ENCODE measurements at regions of chr4 and their contacts with region 1.

Region 1: DNA sequence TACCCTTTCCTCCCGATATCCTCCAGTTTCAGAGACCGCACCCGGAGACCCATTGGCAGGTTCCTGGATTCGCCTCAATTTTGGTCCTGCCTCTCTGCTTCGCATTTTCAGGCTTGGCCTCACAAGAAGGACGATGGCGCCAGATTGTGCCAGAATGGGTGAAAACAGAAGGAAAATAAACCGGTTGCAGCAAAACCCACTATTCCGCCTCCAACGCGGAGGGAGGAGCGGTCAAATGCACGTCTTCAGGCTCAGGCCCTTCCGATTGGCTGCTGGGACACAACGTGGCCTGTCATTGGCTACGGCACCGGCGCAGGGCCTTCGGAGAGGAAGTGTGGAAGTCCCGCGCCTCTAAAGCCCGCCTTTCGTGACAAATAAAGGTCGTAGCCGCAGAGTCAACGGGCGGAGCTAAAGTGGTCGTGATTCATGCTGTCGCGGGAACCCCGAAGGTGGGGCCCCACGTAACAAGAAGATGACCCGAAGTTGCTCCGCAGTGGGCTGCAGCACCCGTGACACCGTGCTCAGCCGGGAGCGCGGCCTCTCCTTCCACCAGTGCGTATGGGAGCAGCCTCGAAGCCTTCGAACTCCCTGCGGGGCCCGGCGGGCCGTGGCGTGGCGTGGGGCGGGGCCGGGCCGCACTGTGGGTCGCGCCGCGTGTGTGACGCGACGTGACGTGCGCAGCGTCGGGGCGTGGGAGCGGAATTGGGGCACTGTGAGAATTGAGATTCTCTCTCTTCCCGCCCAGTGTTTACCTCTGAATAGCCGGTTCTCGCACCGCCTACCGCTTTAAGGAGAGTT is at the start of gene THAP9:
- DNase-seq: peak; percentile 95 to 99
- ATAC-seq: peak; percentile 82 to 96 (median 86)
- H3K4me3 ChIP-seq: peak within 1 kb of the TSS; percentile 91
- H3K4me3 Mint-ChIP-seq: no peak within 1 kb of the TSS
- H3K27ac ChIP-seq: peak within 1 kb of the TSS; percentile 100
- H3K27ac Mint-ChIP-seq: no peak within 1 kb of the TSS
- H3K4me1 ChIP-seq: peaks cover 5% of the 10 kb centered on the region
- H3K4me1 Mint-ChIP-seq: peaks cover 10 to 11% of the 10 kb centered on the region in 2 donors
- H3K27me3 ChIP-seq: no peaks in the 10 kb centered on the region
- H3K27me3 Mint-ChIP-seq: no peaks in the 10 kb centered on the region
- CTCF ChIP-seq: no peak
- total RNA-seq, gene THAP9: 1.6 to 2.6 (median 2.1) TPM

Region 2: DNA sequence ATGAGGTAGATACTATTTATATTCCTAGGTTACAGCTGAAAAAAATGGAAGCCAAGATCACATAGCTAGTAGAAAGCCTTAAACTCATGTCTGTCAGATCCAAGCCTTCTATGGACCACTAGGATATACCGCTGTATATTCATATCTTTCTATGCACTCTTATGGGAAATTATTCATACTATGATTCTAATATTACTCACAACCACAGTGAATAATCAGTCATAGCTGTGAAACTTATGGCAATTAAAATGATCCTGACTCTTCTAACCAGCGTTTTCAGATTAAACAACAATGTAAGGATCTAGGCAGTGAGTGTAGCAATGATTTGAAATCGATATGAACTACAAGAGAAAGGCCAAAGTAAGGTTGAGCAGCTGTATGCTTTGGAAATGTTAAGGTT is 1539.8 kb before region 1 on chr4:
- intact Hi-C with region 1: no loop called
- DNase-seq: no peak
- ATAC-seq: no peak
- H3K4me3 ChIP-seq: no peak overlapping the region
- H3K4me3 Mint-ChIP-seq: no peak overlapping the region
- H3K27ac ChIP-seq: no peak overlapping the region
- H3K27ac Mint-ChIP-seq: no peak overlapping the region
- H3K4me1 ChIP-seq: no peaks in the 10 kb centered on the region
- H3K4me1 Mint-ChIP-seq: no peaks in the 10 kb centered on the region
- H3K27me3 ChIP-seq: no peaks in the 10 kb centered on the region
- H3K27me3 Mint-ChIP-seq: peaks cover 9 to 14% of the 10 kb centered on the region in 2 donors
- CTCF ChIP-seq: no peak

Region 3: DNA sequence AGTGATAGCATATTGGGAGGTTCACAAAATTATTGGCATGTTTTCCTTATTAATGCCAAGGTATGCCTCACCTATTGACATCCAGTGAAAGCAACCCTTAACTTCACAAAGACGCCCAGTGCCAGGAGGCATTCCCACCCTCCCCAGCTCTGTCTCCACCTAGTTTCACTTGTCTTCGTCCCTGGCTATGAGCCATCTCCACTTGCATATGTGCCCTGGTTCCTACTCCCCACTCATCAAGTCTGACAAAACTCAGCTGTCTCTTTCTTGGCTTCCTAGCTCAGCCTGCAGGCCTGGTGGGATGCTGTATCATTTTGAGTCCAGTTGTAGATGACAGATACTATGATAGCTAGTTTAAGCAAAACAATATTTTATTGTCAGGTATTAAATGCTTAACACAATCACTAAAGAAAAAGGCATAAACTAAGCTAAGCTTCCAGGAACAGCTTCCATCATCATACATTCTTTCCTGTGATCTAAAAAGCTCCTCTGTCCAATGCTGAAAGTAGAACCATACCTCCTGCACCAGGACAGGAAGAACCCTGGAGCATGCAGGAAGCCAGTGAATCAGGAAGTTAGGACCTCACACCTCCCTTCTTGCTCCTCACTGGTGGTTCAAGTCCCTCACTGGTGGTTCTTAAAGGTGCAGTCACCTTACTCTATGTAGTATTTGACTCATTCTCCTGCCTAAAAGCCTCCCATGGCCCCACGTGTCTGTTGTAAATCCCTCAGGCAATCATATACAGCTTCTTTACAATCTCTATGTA is 1018.5 kb before region 1 on chr4:
- intact Hi-C with region 1: no loop called
- DNase-seq: peak in 1 of 2 donors; percentile 3
- ATAC-seq: peak in 1 of 3 donors; percentile 40
- H3K4me3 ChIP-seq: no peak overlapping the region
- H3K4me3 Mint-ChIP-seq: no peak overlapping the region
- H3K27ac ChIP-seq: no peak overlapping the region
- H3K27ac Mint-ChIP-seq: no peak overlapping the region
- H3K4me1 ChIP-seq: no peaks in the 10 kb centered on the region
- H3K4me1 Mint-ChIP-seq: peaks cover 11% of the 10 kb centered on the region in 2 donors
- H3K27me3 ChIP-seq: no peaks in the 10 kb centered on the region
- H3K27me3 Mint-ChIP-seq: peaks cover 3 to 7% of the 10 kb centered on the region in 2 donors
- CTCF ChIP-seq: no peak

Region 4: DNA sequence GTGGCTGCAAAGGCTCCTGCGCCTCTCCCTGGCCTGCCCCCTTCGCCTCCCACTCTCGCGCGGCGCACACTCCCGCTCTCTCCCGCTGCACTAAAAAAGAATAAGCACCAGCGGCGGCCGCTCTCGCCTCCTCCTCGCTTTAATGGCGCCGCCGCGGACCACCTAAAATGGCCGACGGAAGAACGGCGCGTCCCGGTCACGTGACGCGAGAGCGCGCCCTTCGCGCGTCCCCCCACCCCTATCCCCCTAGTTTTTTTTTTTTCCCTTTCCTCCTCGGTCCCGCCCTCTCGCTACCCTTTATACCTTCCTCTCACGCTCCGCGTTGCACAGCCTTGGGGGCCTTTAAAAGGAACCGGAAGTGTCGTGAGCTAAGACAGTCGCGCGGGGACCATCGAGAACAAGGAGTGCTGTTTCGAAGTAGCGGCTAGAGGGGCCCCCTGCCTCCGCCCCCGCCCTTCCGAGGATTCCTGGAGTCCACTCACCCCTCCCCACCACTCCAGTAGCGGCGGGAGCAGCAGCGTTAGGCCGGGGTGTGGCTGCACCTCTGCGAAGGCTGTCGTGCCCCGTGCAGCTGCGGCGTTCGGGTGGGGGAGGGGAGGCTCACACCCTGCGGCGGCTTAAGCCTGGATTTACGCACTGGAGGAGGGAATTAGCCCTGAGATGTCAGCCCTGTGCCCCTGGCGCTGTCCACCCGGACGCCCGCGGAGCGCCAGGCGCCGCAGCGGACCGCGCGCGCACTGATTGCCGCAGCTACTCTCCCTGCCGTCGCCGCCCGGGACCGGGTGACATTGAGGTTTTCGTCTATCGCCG is 526.5 kb before region 1 on chr4 and contains the start of gene HNRNPD:
- intact Hi-C with region 1: loop called (anchors 2 kb)
- DNase-seq: peak; percentile 84 to 98
- ATAC-seq: peak; percentile 76 to 94 (median 84)
- H3K4me3 ChIP-seq: peak within 1 kb of the TSS; percentile 98
- H3K4me3 Mint-ChIP-seq: peak within 1 kb of the TSS; percentile 100
- H3K27ac ChIP-seq: peak within 1 kb of the TSS; percentile 99
- H3K27ac Mint-ChIP-seq: peak within 1 kb of the TSS; percentile 99 to 100
- H3K4me1 ChIP-seq: peaks cover 15% of the 10 kb centered on the region
- H3K4me1 Mint-ChIP-seq: peaks cover 57 to 69% of the 10 kb centered on the region in 2 donors
- H3K27me3 ChIP-seq: no peaks in the 10 kb centered on the region
- H3K27me3 Mint-ChIP-seq: peaks cover 0 to 3% of the 10 kb centered on the region in 2 donors
- CTCF ChIP-seq: no peak
- total RNA-seq, gene HNRNPD: 225 to 285 (median 270) TPM

Region 5: DNA sequence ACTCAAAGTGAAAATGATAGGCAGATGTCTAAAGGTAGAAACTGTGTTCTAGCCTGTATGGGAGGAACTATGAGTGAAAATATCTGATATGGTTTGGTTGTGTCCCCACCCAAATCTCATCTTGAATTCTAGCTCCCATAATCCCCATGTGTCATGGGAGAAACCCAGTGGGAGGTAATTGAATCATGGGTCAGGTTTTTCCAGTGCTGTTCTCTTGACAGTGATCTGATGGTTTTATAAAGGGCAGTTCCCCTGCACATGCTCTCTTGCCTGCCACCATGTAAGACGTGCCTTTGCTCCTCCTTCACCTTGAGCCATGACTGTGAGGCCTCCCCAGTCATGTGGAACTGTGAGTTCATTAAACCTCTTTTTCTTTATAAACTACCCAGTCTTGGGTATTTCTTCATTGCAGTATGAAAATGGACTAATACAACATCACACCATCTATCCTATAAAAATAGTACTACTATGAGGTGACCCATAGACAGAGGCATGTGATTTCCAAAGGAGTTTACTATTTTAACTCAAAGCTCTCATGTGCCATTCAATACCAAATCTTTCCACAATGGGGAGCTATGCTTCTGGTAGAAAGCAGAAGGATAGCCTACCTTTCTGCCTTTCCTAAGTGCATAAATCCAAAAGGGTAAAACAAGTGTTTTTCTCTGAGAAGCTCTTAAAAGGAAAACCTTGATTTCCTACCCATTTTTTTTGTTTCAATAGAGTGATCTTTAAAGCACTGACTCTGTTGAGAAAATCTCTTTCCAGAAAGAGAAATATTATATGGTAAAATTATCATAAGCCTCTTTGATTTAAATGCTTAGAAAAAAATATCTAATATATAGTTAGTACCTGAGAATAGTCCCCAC is 48.4 kb before region 1 on chr4:
- intact Hi-C with region 1: loop called (anchors 5 kb)
- DNase-seq: peak in 1 of 2 donors; percentile 61
- ATAC-seq: peak in 2 of 3 donors; percentile 49 to 67
- H3K4me3 ChIP-seq: no peak overlapping the region
- H3K4me3 Mint-ChIP-seq: no peak overlapping the region
- H3K27ac ChIP-seq: no peak overlapping the region
- H3K27ac Mint-ChIP-seq: peak overlapping the region in 1 of 2 donors; percentile 31
- H3K4me1 ChIP-seq: no peaks in the 10 kb centered on the region
- H3K4me1 Mint-ChIP-seq: no peaks in the 10 kb centered on the region
- H3K27me3 ChIP-seq: no peaks in the 10 kb centered on the region
- H3K27me3 Mint-ChIP-seq: no peaks in the 10 kb centered on the region
- CTCF ChIP-seq: peak; percentile 58

Region 6: GRCh38 chr4:83034630-83035494 is 134.3 kb after region 1 on chr4 and contains the start of gene COPS4:
- intact Hi-C with region 1: loop called (anchors 1 kb)
- DNase-seq: peak; percentile 90 to 99
- ATAC-seq: peak; percentile 95 to 100 (median 95)
- H3K4me3 ChIP-seq: peak within 1 kb of the TSS; percentile 85
- H3K4me3 Mint-ChIP-seq: peak within 1 kb of the TSS; percentile 100
- H3K27ac ChIP-seq: peak within 1 kb of the TSS; percentile 87
- H3K27ac Mint-ChIP-seq: peak within 1 kb of the TSS; percentile 95 to 99
- H3K4me1 ChIP-seq: peaks cover 11% of the 10 kb centered on the region
- H3K4me1 Mint-ChIP-seq: peaks cover 25 to 30% of the 10 kb centered on the region in 2 donors
- H3K27me3 ChIP-seq: no peaks in the 10 kb centered on the region
- H3K27me3 Mint-ChIP-seq: no peaks in the 10 kb centered on the region
- CTCF ChIP-seq: peak; percentile 25
- total RNA-seq, gene COPS4: 35.8 to 39.8 (median 36.1) TPM